ENCODE measurements at regions of chr1 and their contacts with region 1.

Region 1: GRCh38 chr1:20100632-20101355 is 18.5 kb downstream of the PLA2G2D start:
- H3K4me3 Mint-ChIP-seq: no peak overlapping the region
- H3K27ac Mint-ChIP-seq: no peak overlapping the region
- H3K4me1 Mint-ChIP-seq: peaks cover 16% of the 10 kb centered on the region
- H3K27me3 Mint-ChIP-seq: peaks cover 58% of the 10 kb centered on the region

Region 2: DNA sequence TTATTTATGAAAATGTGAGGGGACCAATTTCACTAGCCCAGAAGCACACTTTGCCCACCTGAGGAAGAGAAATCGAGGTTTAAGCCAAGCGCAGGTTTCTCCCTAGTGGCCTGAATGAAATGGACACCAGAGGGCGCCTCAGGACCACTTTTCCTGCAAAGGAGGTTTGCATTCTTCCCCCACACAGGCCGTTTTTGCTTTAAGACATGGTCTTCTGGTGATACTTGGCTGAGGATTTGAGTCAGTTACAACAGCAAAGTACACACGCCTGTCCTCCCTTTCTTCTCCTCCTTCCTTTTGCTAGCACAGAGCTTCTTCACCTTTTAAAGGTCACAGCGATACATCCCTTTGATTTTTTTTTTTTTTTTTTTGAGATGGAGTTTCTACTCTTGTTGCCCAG is 182.7 kb before region 1 on chr1:
- intact Hi-C with region 1: loop called (anchors 5 kb)
- H3K4me3 Mint-ChIP-seq: no peak overlapping the region
- H3K27ac Mint-ChIP-seq: no peak overlapping the region
- H3K4me1 Mint-ChIP-seq: no peaks in the 10 kb centered on the region
- H3K27me3 Mint-ChIP-seq: peaks cover 2% of the 10 kb centered on the region

Region 3: DNA sequence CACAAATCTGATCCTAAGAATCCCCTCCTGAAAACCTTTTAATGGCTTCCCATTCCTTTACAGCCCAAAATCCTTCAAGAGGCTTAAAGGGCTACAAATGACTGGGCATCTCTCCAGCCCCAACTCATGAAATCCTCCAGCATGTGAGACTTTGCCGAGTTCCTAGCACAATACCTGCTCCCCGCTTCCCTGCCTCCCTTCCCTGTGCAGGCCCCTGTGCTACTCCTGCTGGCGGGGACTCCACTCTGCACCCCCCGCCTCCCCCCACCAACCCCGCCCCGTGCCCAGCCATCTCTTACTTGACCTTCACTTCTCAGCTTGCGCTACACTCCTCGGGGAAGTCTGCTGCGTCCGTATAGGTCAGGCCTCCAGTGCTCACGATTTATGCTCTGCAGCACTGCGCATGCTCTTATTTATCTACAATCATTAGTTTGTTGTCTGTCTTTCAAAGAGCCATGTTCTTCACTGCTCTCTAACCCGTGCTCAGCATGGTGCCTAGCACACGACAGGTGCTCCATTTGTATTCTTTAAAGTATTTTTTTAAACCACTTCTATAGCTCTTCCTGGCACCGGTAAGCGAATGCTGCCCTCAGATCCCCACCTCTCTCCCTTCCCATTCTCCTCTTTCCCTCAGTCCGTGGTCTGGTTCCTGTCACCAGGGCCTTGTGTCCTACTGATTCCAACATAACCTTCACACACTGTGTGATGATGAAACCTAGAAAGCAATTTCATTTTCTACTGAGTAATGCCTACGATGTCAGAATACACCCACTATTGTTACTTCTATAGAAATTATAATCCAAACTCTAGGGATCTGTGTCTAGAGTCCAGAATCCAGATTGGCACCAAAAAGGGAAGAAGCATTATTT is 123.0 kb after region 1 on chr1:
- intact Hi-C with region 1: no loop called
- H3K4me3 Mint-ChIP-seq: no peak overlapping the region
- H3K27ac Mint-ChIP-seq: no peak overlapping the region
- H3K4me1 Mint-ChIP-seq: peaks cover 8% of the 10 kb centered on the region
- H3K27me3 Mint-ChIP-seq: peaks cover 55% of the 10 kb centered on the region